Lower leg skin (tissue), 4 donors: ENCODE measurements at regions of chr3 and their contacts with region 1.

Region 1: DNA sequence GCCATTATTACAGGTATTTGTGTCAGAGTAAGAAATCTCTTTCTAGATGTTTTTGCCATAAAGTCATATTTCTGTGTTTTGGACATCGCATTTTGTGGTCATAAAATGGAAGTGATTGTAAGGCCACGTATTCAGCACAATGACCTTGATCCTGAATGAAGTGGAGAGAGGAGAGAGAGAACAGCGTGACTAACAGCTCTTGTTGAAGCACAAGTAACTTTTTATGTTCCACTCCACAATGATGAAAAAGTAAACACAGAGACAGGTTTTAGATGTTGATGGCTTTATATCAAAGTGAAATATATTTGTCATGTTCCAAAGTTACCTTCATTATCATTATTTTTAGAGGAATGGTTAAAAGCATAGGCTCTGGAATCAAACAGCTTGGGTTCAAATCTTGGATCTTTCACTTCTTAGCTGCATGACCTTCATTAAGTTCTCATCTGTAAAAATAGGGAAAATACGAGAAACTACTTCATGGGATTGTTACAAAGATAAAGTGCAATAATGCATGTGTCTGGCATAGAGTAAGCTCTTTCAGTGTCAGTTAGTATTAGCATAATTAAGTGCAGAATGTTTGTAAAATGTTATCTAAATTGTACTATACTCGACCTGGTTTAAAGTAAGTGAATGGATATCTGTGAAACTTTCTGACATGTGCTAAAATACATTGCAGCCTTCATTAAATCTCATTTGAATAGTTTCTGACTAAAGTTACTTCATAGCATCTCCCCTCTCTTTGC is 341.5 kb upstream of the DNAJC19 start:
- DNase-seq: no peak
- H3K4me3 ChIP-seq: no peak overlapping the region
- CTCF ChIP-seq: no peak
- POLR2A ChIP-seq: no peak

Region 2: DNA sequence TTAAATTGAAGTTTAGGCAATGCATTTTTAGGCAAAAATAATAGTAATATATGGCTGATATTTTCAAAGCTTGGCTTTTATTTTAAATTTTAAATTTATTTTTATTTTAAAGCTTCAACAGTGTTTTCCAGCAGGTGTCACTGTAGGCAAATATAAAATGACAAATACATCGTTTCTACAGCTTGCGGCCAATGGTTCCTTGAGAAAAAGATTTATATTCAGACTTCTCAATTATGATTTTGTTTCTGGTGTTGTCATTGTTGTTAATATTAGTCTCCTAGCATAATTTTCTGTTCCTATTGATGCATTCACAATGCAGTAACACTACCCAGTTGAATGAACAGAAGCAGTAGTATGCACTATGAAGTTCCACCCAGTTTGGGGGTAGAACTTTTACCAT is 120.7 kb before region 1 on chr3:
- intact Hi-C with region 1: no loop called
- DNase-seq: no peak
- H3K4me3 ChIP-seq: no peak overlapping the region
- CTCF ChIP-seq: no peak
- POLR2A ChIP-seq: no peak

Region 3: DNA sequence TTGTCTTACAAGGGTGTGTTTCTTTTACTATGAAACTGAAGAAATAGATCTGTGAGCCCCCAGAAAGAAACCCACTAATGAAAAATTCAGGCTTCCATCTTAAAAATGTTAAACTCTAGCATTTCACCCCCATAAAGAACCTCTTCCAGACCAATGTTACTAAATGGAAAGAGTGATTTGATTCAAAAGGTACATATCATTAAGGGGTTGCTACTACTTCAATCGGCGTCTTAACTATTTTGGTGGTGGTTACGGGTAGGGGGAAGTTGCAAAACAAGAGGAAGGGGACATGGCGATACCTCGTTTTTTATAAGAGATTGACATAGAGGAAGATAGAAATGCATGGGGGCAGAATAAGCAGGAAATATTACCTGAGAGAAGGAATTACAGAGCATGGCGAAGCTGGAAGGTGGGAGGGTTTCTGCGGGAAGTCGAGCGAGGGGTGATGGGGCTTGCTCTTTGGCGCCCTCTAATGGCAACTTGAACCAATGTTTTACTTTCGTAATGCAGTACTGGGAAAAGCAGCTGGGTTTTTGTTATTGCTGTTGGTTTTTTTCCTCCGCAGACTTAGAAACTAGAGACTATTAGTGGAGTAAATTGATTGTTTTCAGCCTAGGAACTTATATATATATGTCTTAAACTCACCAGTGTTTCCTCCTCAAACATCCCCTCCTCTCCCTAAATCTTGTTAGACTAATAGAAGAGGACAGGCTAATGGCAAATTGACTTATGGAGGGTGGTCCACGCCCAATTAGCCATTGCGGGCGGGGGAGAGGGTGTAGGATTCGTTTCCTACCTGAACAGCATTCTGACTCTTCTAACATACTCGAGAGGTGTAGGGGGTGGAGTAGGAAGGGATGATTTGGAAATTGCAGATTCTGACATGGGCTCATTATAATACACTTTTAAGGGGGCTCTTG is 369.4 kb after region 1 on chr3:
- intact Hi-C with region 1: loop called (anchors 10 kb)
- DNase-seq: no peak
- H3K4me3 ChIP-seq: no peak overlapping the region
- CTCF ChIP-seq: peak in 1 of 3 donors; percentile 20
- POLR2A ChIP-seq: no peak